Endothelial cell of umbilical vein (primary cell): ENCODE measurements at regions of chr5 and their contacts with region 1.

Region 1: GRCh38 chr5:71482132-71482531 is 26.7 kb downstream of the BDP1 start:
- DNase-seq: peak; percentile 91
- H3K4me3 ChIP-seq: no peak overlapping the region
- H3K27ac ChIP-seq: peak overlapping the region; percentile 91
- H3K4me1 ChIP-seq: peaks cover 33% of the 10 kb centered on the region
- H3K27me3 ChIP-seq: no peaks in the 10 kb centered on the region
- CTCF ChIP-seq: no peak
- POLR2A ChIP-seq: no peak

Region 2: GRCh38 chr5:71455427-71456361 is 26.4 kb before region 1 on chr5 and contains the start of gene BDP1:
- CTCF ChIA-PET with region 1: no interaction called
- POLR2A ChIA-PET with region 1: no interaction called
- dilution Hi-C with region 1: no loop called
- intact Hi-C with region 1: loop called (anchors 2 kb)
- DNase-seq: peak; percentile 95
- H3K4me3 ChIP-seq: peak within 1 kb of the TSS; percentile 89 to 99 (median 97)
- H3K27ac ChIP-seq: peak within 1 kb of the TSS; percentile 74
- H3K4me1 ChIP-seq: peaks cover 14% of the 10 kb centered on the region
- H3K27me3 ChIP-seq: peaks cover under 1 to 6% of the 10 kb centered on the region in 2 experiments
- CTCF ChIP-seq: peak in 1 of 2 donors; percentile 27
- POLR2A ChIP-seq: peak; percentile 63
- total RNA-seq, gene BDP1: 25.2 and 27.5 TPM in 2 replicates

Region 3: GRCh38 chr5:71533614-71534013 is 51.5 kb after region 1 on chr5:
- CTCF ChIA-PET with region 1: no interaction called
- POLR2A ChIA-PET with region 1: no interaction called
- dilution Hi-C with region 1: no loop called
- intact Hi-C with region 1: no loop called
- DNase-seq: peak; percentile 51
- H3K4me3 ChIP-seq: no peak overlapping the region
- H3K27ac ChIP-seq: no peak overlapping the region
- H3K4me1 ChIP-seq: no peaks in the 10 kb centered on the region
- H3K27me3 ChIP-seq: no peaks in the 10 kb centered on the region
- CTCF ChIP-seq: no peak
- POLR2A ChIP-seq: no peak

Region 4: GRCh38 chr5:71748369-71748780 is 266.2 kb after region 1 on chr5:
- CTCF ChIA-PET with region 1: no interaction called
- POLR2A ChIA-PET with region 1: no interaction called
- dilution Hi-C with region 1: no loop called
- intact Hi-C with region 1: no loop called
- DNase-seq: no peak
- H3K4me3 ChIP-seq: no peak overlapping the region
- H3K27ac ChIP-seq: no peak overlapping the region
- H3K4me1 ChIP-seq: no peaks in the 10 kb centered on the region
- H3K27me3 ChIP-seq: peaks cover 0 to 2% of the 10 kb centered on the region in 2 experiments
- CTCF ChIP-seq: no peak
- POLR2A ChIP-seq: no peak